ENCODE measurements at regions of chrX and their contacts with region 1.

Region 1: DNA sequence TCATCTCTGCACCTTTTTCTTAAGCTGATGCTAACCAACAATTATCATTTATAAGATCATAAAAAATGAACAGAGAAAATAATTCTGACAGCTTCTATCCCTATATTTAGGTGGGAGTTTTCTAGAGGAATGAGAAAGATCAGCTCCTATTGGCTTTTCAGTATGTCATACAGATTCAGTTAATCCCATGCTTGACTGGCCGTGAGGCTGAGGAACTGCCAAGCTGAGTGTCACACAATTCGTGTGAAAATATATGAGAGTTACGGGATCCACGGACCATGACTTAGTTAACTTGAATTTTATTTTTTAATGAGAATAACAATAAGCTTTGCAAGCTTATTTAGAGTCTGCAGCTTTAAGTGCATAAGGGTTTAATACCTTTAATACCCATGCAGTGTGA is 37.5 kb downstream of the PHEX start:
- DNase-seq: no peak
- CTCF ChIP-seq: no peak

Region 2: GRCh38 chrX:21821875-21822274 is 247.7 kb before region 1 on chrX:
- CTCF ChIA-PET with region 1: no interaction called
- POLR2A ChIA-PET with region 1: no interaction called
- DNase-seq: no peak
- CTCF ChIP-seq: no peak

Region 3: DNA sequence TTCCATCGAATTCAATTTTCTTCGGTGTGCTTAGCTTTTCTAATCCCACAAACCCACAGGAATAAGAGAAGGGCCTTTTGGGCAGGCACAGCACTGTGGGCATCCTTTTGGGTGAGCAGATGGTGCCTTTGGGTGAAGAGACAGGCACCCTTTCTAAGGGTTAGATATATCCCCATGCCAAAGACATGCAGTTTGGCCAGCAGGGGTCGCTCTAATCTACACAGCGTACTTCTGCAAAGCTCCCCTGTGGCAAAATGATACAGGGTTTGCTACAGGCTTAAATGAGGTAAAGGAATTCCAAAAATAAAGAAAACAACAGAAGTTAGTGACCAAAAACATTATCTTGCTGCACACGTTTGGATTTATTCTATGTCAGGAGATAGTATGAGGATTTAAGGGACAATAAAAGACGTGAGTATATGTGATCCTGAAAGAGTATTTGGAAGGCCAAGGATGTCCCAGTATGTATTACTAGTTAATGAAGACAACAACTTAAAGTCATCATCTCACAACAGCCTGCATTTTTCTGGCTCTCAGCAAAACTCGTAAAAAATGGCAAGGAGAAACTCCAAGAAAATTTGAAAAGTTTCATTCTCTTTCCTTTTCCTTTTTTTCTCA is 12.0 kb after region 1 on chrX:
- CTCF ChIA-PET with region 1: interaction called, 14 read pairs
- POLR2A ChIA-PET with region 1: no interaction called
- DNase-seq: no peak
- CTCF ChIP-seq: peak; percentile 32

Region 4: DNA sequence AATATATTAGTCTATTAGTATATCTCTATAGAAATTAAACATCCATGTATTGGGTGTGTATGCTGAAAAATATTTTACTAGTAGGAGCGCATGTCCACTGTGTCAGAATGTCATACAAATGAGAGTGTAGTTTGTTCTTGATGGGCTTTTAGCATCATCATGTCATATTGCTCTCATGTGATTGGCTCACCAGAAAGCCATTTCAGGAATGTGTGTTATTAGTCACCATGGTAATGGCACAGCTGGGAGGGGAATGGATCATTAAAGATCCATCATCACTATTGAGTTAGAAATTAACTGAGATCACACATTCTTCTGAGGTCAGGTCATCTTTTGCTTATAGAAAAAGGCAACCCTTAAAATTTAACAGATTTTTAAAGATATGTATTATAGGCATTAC is 39.9 kb after region 1 on chrX:
- CTCF ChIA-PET with region 1: no interaction called
- POLR2A ChIA-PET with region 1: no interaction called
- DNase-seq: no peak
- CTCF ChIP-seq: no peak